CD14-positive monocyte (primary cell): ENCODE measurements at regions of chr1 and their contacts with region 1.

Region 1: DNA sequence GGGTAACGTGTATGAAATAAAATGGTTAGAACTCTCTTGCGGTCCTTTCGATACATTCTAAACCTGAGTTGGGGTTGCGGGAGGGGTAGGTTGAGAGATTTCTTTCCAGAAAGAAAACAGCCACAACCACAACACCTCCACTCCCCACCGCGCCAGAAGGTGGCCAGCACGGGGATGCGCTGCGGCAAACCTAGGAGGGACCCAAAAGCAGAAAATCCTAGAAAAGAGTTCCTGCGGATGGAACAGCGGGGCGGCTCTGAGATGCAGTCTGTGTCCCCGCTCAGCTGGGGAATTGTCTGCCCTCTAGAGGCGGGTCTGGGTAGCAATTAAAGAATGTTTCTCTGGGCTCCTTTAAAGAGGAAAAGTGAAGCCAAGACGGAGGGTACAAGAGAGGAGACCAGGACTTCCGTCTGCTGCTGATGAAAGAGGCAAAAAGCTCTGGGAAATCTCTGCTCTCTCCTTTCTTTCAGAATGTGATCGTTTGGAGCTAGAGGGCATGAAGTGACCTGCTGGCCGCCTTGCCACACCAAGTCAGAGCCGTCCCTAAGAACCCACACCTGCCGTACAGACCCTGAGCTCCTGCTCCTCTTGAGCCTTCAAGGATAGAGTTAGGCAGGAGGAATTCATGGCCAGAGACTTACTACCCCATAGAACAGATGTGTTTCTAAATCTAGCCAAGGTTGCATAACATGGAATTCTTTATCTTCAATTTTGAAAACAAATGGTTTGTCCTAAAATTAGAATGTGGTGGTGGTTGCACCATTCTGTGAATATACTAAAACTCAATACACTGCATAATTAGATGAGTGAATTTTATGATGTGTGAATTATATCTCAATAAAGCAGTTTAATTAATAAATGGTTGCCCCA is 46.5 kb upstream of the COA6 start:
- DNase-seq: peak in 2 of 3 donors; percentile 55 to 58
- H3K4me3 ChIP-seq: peak overlapping the region; percentile 5 to 68 (median 11)
- H3K4me3 Mint-ChIP-seq: peak overlapping the region; percentile 74
- H3K27ac ChIP-seq: peak overlapping the region in 1 of 2 donors; percentile 40
- H3K27ac Mint-ChIP-seq: peak overlapping the region in 6 of 7 donors; percentile 15 to 87 (median 70)
- H3K4me1 ChIP-seq: peaks cover 46 to 48% of the 10 kb centered on the region in 2 donors
- H3K4me1 Mint-ChIP-seq: peaks cover 52% of the 10 kb centered on the region
- H3K27me3 ChIP-seq: no peaks in the 10 kb centered on the region
- H3K27me3 Mint-ChIP-seq: peaks cover 2 to 13% (median 5%) of the 10 kb centered on the region in 3 donors
- CTCF ChIP-seq: peak; percentile 72

Region 2: DNA sequence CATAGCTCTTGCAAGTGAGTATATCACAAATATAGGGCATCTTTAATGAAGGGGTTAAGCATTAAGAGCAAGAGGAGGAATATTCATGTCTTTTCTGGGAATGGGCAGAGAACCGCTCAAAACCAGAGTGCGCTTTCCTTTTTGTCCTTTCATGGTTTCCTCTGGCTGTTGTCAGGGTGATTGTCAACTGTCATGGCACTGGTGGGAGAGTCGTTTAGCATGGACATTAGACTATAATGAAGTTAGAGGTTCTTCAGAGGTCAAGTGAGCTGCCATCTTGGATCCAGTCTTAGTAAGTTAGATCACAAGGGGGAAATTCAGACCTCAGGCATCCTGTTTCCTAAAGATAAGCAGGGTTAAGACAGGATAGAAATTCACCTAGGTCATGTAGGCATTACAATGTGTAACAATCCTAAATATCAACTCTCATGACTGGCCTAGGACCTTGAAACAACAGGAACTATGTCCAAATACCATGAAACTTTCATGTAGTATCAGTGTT is 34.4 kb after region 1 on chr1:
- intact Hi-C with region 1: no loop called
- DNase-seq: no peak
- H3K4me3 ChIP-seq: no peak overlapping the region
- H3K4me3 Mint-ChIP-seq: no peak overlapping the region
- H3K27ac ChIP-seq: no peak overlapping the region
- H3K27ac Mint-ChIP-seq: no peak overlapping the region
- H3K4me1 ChIP-seq: no peaks in the 10 kb centered on the region
- H3K4me1 Mint-ChIP-seq: no peaks in the 10 kb centered on the region
- H3K27me3 ChIP-seq: no peaks in the 10 kb centered on the region
- H3K27me3 Mint-ChIP-seq: peaks cover 1 to 4% (median 3%) of the 10 kb centered on the region in 3 donors
- CTCF ChIP-seq: no peak

Region 3: GRCh38 chr1:234373064-234373958 is 46.6 kb after region 1 on chr1 and contains the start of gene COA6:
- intact Hi-C with region 1: loop called (anchors 5 kb)
- DNase-seq: peak; percentile 92 to 95 (median 94)
- H3K4me3 ChIP-seq: peak within 1 kb of the TSS; percentile 91 to 93 (median 92)
- H3K4me3 Mint-ChIP-seq: peak within 1 kb of the TSS; percentile 90 to 98
- H3K27ac ChIP-seq: peak within 1 kb of the TSS; percentile 98 to 99
- H3K27ac Mint-ChIP-seq: peak within 1 kb of the TSS; percentile 98 to 99 (median 99)
- H3K4me1 ChIP-seq: peaks cover 17 to 30% of the 10 kb centered on the region in 2 donors
- H3K4me1 Mint-ChIP-seq: peaks cover 29% of the 10 kb centered on the region
- H3K27me3 ChIP-seq: no peaks in the 10 kb centered on the region
- H3K27me3 Mint-ChIP-seq: peaks cover 0 to 4% (median 0%) of the 10 kb centered on the region in 3 donors
- CTCF ChIP-seq: no peak
- polyA plus RNA-seq, gene COA6: 7.2 to 55.5 (median 46.3) TPM

Region 4: DNA sequence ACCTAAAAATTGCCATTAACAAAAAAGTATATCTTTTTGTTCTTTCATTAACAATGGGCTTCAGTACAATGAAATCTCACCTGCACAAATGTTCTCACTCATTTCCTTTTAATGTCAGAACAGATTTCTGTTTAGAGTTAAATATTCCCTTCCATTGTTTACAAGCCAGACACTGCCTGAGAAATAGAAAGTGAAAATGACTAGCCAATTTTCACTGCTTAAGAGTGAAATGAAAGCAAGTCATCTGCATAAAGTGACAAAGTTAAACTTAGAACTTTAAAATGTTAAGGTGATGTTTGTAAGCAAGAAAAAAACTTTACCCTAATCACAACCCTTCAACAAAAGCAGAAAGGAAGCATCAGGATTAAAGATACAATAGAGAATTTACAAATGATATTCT is 74.0 kb after region 1 on chr1:
- intact Hi-C with region 1: loop called in 1 of 2 experiments (anchors 10 kb)
- DNase-seq: peak in 2 of 3 donors; percentile 8 to 27
- H3K4me3 ChIP-seq: peak overlapping the region in 1 of 3 experiments; percentile 54
- H3K4me3 Mint-ChIP-seq: peak overlapping the region; percentile 13 to 65
- H3K27ac ChIP-seq: peak overlapping the region in 1 of 2 donors; percentile 61
- H3K27ac Mint-ChIP-seq: peak overlapping the region; percentile 54 to 85 (median 79)
- H3K4me1 ChIP-seq: peaks cover 31 to 40% of the 10 kb centered on the region in 2 donors
- H3K4me1 Mint-ChIP-seq: peaks cover 36% of the 10 kb centered on the region
- H3K27me3 ChIP-seq: no peaks in the 10 kb centered on the region
- H3K27me3 Mint-ChIP-seq: no peaks in the 10 kb centered on the region
- CTCF ChIP-seq: no peak

Region 5: DNA sequence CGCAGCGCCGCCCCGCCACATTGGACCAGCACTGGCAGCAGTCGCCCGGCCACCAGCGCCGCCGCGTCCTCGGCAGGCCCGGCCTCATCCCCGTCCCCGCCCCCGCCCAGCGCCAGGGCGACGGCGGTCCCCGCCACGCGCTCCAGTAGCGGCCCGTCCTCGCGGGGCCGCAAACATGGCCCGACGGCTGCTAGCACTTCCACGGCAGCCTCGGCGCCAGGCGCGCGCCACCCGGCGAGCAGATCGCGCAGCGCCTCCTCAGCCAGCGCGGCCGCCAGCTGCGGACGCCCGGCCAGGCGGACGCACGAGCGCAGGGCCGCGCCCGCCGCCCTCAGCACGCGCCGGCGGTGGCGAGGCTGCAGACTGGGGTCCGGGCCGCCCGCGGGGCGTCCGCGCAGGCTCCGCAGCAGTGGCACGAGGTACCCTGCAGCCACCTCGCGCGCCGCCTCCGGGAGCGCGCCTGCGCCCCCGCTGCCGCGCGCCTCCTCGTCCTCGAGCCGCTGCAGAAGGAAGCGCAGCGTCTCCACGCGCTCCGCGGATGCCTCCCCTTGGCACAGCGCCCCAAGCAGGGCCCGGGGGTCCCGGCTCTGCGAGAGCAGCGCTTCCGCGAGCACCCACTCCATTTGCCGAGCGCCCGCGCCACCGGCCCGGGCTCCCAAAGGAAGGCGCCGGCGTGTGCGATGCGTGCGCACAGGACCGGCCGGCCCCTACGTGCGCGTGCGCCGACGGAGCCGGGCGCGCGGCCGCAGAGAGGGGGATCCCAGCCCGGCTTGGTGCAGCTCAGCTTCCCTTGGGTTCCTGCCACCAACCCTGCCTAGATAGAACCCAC is 152.0 kb after region 1 on chr1 and contains the start of gene TARBP1:
- intact Hi-C with region 1: loop called in 1 of 2 experiments (anchors 10 kb)
- DNase-seq: peak; percentile 66 to 75 (median 69)
- H3K4me3 ChIP-seq: peak within 1 kb of the TSS; percentile 65 to 84 (median 80)
- H3K4me3 Mint-ChIP-seq: peak within 1 kb of the TSS; percentile 85 to 91
- H3K27ac ChIP-seq: peak within 1 kb of the TSS; percentile 46 to 58
- H3K27ac Mint-ChIP-seq: peak within 1 kb of the TSS in 5 of 7 donors; percentile 56 to 87 (median 76)
- H3K4me1 ChIP-seq: peaks cover 30 to 36% of the 10 kb centered on the region in 2 donors
- H3K4me1 Mint-ChIP-seq: peaks cover 34% of the 10 kb centered on the region
- H3K27me3 ChIP-seq: no peaks in the 10 kb centered on the region
- H3K27me3 Mint-ChIP-seq: peaks cover 0 to 10% (median 8%) of the 10 kb centered on the region in 3 donors
- CTCF ChIP-seq: no peak
- polyA plus RNA-seq, gene TARBP1: 1.4 to 30.9 (median 3.2) TPM

Region 6: DNA sequence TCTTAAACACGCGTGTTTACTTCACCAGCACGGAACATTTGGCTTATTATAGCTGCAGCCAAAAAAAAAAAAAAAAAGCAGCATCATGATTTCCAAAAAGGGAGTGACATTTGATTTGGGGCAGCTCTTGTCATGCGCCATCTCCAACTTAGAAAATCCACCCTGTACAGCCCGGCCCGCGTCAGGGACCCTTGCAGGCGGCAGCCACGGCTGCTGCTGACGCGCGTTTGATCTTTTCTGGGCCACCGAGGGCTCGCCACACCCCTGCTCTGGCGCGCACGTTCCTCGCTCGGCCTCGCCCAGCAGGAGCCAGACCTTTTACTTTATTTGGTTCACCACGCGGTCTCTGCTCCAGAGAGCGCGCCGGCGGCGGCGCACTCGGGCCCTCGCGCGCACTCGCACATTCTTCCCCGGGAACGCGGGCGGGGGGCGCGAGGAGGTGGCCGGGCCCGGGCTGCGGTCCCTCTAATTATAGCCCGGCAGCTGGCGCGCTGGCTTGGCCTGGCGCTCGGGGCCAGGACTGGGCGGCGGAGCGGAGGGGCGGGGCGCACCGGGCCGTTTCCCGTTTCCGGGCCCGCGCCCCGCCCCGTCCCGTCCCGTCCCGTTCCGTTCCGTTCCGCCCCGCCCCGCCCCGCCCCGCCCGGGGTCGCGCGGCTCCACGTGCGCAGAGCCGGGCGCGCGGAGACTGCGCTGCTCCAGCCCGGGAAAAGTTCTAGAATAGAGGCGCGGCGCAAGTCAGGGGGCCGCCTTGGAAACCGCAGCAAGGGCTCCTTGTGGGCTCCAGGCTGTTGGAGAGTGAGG is 273.1 kb after region 1 on chr1:
- intact Hi-C with region 1: loop called in 1 of 2 experiments (anchors 10 kb)
- DNase-seq: peak; percentile 61 to 70 (median 65)
- H3K4me3 ChIP-seq: peak overlapping the region; percentile 46 to 95 (median 52)
- H3K4me3 Mint-ChIP-seq: peak overlapping the region; percentile 88 to 100
- H3K27ac ChIP-seq: peak overlapping the region; percentile 81 to 89
- H3K27ac Mint-ChIP-seq: peak overlapping the region; percentile 93 to 100 (median 93)
- H3K4me1 ChIP-seq: peaks cover 57 to 66% of the 10 kb centered on the region in 2 donors
- H3K4me1 Mint-ChIP-seq: peaks cover 42% of the 10 kb centered on the region
- H3K27me3 ChIP-seq: no peaks in the 10 kb centered on the region
- H3K27me3 Mint-ChIP-seq: peaks cover 0 to 2% (median 0%) of the 10 kb centered on the region in 3 donors
- CTCF ChIP-seq: no peak